Uterus (tissue), 4 donors: ENCODE measurements at regions of chr18 and their contacts with region 1.

Region 1: GRCh38 chr18:58276789-58277739 is 233.0 kb downstream of the NEDD4L start:
- DNase-seq: no peak
- H3K4me3 ChIP-seq: no peak overlapping the region
- H3K27ac ChIP-seq: no peak overlapping the region
- H3K4me1 ChIP-seq: no peaks in the 10 kb centered on the region
- H3K27me3 ChIP-seq: no peaks in the 10 kb centered on the region
- CTCF ChIP-seq: no peak
- POLR2A ChIP-seq: no peak

Region 2: DNA sequence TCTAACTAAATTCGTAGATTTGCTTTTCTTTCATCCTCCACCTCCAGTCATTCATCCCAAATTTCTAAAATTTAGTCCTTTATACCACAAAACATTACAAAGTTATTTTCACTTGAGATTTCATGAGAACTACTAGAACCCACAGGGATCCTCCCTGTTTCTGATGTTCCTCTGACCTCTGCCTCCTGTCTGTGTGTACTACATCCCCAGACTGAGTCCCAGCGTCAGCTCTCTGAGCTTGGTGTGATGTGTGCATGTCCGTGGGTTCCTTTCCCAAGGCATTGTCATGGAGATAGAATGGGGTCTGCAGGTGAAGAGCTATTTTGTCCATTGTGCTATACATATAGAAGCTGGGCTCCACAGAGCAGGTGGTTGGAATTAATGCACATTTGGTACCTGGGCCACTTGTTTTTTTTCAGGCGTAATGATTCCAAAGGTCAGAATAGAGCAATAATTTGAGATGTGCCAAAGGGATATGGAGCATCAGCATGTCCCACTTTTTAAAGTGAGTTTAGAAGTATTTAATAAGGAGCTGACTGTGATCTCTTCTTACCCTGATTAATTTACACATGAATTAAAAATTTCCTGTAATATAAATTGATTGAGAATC is 1281.4 kb before region 1 on chr18:
- intact Hi-C with region 1: loop called (anchors 10 kb)
- DNase-seq: no peak
- H3K4me3 ChIP-seq: no peak overlapping the region
- H3K27ac ChIP-seq: no peak overlapping the region
- H3K4me1 ChIP-seq: no peaks in the 10 kb centered on the region
- H3K27me3 ChIP-seq: no peaks in the 10 kb centered on the region
- CTCF ChIP-seq: no peak
- POLR2A ChIP-seq: no peak

Region 3: DNA sequence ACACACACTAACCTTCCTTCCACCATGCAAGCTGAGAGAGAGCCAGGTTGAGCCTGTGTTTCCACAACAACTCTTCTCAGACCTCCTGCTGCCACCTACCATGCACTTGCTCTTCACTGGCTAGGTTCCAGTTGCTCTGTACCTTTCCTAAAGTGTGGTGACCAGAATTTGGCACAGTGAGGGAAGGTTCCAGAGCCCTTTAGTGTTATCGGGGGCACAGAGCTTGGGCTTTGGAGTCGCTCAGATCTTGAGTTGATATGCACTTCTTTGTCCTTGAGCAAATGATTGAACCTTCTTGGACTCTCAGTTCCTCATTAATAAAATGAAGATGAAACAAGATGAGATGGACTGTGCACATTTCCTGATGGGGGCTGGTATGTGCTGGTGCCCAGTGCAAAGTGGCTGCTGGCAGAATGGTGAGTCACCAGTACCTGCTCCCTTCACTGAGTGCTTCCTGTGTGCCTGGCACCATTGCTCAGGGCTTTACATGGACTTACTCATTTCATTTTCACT is 185.9 kb before region 1 on chr18:
- intact Hi-C with region 1: no loop called
- DNase-seq: no peak
- H3K4me3 ChIP-seq: no peak overlapping the region
- H3K27ac ChIP-seq: no peak overlapping the region
- H3K4me1 ChIP-seq: no peaks in the 10 kb centered on the region
- H3K27me3 ChIP-seq: no peaks in the 10 kb centered on the region
- CTCF ChIP-seq: no peak
- POLR2A ChIP-seq: no peak

Region 4: DNA sequence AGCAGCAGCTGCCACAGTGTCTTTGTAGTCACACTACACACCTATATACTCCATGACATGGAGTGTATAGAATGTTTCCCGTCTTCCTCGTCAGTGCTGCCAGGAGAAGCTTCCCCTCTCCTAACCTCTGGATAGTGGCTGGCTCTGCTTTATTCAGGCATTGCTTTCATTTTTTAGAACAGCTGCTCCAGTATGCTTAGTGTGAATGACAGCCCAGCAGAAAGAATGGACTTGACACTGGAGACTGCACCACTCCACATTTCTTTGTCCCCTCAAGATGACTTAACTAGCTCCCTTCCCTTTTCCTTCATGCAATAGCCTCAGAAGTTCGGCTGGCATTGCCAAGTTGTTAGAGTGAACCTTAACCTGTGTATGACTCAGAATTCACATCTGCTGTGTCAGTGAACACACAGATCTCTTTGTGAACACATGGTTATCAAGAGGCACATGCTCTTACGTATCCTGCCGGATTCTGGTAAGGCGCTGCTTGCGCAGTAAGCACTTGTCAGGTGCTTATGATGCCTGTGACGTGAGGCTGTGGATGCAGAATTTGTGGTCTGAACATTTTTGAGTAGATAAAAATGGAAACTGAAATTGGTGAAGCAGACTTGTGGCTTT is 159.2 kb before region 1 on chr18:
- intact Hi-C with region 1: no loop called
- DNase-seq: peak in 1 of 2 donors; percentile 16
- H3K4me3 ChIP-seq: no peak overlapping the region
- H3K27ac ChIP-seq: no peak overlapping the region
- H3K4me1 ChIP-seq: no peaks in the 10 kb centered on the region
- H3K27me3 ChIP-seq: no peaks in the 10 kb centered on the region
- CTCF ChIP-seq: no peak
- POLR2A ChIP-seq: no peak